AG04450 (cell line): ENCODE measurements at regions of chr3 and their contacts with region 1.

Region 1: GRCh38 chr3:187738331-187739093 is 6.8 kb downstream of the BCL6 start:
- DNase-seq: peak; percentile 80
- H3K4me3 ChIP-seq: peak overlapping the region; percentile 55
- H3K27ac ChIP-seq: peak overlapping the region; percentile 91
- H3K27me3 ChIP-seq: no peaks in the 10 kb centered on the region
- CTCF ChIP-seq: peak; percentile 85

Region 2: DNA sequence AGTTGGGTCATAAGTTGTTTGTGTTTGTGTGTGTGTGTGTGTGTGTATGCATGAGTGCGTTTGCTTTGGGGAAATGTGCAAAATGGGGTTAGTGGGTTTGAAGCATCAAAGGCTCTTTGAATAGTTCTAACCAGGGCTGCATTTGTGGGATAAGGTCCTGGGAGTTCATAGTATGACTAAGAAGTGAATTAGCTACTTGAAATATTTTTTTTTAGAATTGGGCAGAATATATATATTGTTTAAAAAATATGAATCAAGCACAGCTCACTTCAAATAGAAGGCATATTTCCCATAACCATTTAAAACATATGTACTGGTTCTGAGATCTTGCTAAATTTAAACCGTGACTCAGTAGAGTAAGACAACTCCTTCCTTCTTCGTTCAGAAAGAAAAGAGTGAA is 1956.8 kb before region 1 on chr3:
- CTCF ChIA-PET with region 1: no interaction called
- POLR2A ChIA-PET with region 1: no interaction called
- DNase-seq: peak; percentile 51
- H3K4me3 ChIP-seq: no peak overlapping the region
- H3K27ac ChIP-seq: no peak overlapping the region
- H3K27me3 ChIP-seq: no peaks in the 10 kb centered on the region
- CTCF ChIP-seq: no peak

Region 3: DNA sequence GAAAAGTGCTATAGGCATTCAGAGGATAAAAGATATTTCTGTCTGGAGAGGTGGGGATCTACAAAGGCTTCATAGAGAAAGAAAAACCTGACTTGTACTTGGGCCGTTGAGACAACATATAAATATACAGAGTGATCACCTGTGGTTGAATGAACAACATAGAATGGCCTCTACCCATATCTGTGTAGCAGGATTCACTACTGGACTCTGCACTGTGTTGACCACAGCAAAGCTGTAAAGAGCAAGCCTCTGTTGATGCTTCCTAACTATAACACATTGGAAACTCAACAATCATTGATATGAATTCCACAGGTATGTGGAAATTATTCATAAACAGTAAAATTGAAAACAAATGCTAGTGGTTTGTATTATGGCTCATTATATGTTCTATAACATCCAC is 396.3 kb after region 1 on chr3:
- CTCF ChIA-PET with region 1: interaction called, 12 read pairs
- POLR2A ChIA-PET with region 1: no interaction called
- DNase-seq: no peak
- H3K4me3 ChIP-seq: no peak overlapping the region
- H3K27ac ChIP-seq: no peak overlapping the region
- H3K27me3 ChIP-seq: no peaks in the 10 kb centered on the region
- CTCF ChIP-seq: no peak

Region 4: DNA sequence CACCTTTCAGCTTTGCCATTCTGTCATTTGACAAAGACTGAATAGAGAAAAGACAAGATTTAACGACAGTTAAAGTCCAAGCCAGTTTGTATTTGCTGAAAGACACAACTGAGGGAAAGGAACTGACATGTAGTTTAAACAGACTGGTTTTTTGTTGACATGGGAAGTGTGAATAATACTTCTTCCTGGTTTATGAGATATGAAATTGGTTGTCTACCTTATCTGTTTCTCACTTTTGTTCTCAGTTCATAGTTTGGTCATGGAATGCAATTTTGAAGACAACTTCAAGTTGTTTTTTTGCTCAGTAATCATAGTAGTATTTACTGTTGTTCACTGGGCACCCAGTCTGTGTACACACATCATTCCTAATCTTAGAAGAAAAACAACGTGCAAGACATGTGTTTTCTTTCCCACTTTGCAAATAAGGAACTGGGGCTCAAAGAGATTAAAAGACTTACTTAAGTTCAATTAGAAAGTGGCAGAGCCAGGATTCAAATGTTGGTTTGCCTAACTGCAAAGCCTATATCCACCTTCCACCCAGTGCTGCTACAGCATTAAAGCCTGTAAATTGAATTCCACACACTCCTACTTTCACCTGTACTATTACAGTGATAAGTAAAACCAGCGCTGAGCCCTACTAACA is 519.0 kb after region 1 on chr3:
- CTCF ChIA-PET with region 1: interaction called, 51 read pairs
- POLR2A ChIA-PET with region 1: no interaction called
- DNase-seq: no peak
- H3K4me3 ChIP-seq: no peak overlapping the region
- H3K27ac ChIP-seq: no peak overlapping the region
- H3K27me3 ChIP-seq: no peaks in the 10 kb centered on the region
- CTCF ChIP-seq: no peak

Region 5: GRCh38 chr3:188296761-188297612 is 558.5 kb after region 1 on chr3:
- CTCF ChIA-PET with region 1: interaction called, 11 read pairs
- POLR2A ChIA-PET with region 1: no interaction called
- DNase-seq: no peak
- H3K4me3 ChIP-seq: no peak overlapping the region
- H3K27ac ChIP-seq: peak overlapping the region; percentile 69
- H3K27me3 ChIP-seq: no peaks in the 10 kb centered on the region
- CTCF ChIP-seq: no peak

Region 6: GRCh38 chr3:188489639-188490405 is 751.3 kb after region 1 on chr3:
- CTCF ChIA-PET with region 1: interaction called, 16 read pairs
- POLR2A ChIA-PET with region 1: no interaction called
- DNase-seq: peak; percentile 41
- H3K4me3 ChIP-seq: no peak overlapping the region
- H3K27ac ChIP-seq: peak overlapping the region; percentile 12
- H3K27me3 ChIP-seq: no peaks in the 10 kb centered on the region
- CTCF ChIP-seq: no peak

Region 7: DNA sequence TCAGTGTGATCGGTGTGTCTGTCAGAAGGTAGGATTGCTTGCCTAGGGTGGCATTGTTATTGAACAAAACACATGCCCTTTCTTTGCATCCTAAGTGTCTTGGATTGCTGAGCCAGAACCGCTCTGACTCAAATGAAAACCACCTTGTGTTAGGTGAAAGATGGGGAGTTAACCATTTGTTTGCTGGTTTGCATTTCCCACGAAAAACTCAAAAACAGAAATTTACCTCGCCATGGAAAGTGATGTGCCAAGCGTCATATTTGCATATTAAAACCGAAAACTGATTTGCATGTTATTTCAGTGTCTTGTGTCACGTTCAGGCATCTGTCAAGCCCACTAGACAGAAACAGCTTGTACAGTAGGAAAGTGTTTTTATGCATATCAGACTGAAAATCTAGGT is 958.6 kb after region 1 on chr3:
- CTCF ChIA-PET with region 1: interaction called, 11 read pairs
- POLR2A ChIA-PET with region 1: no interaction called
- DNase-seq: no peak
- H3K4me3 ChIP-seq: no peak overlapping the region
- H3K27ac ChIP-seq: no peak overlapping the region
- H3K27me3 ChIP-seq: no peaks in the 10 kb centered on the region
- CTCF ChIP-seq: no peak

Region 8: GRCh38 chr3:189041482-189042090 is 1303.1 kb after region 1 on chr3:
- CTCF ChIA-PET with region 1: interaction called, 17 read pairs
- POLR2A ChIA-PET with region 1: no interaction called
- DNase-seq: no peak
- H3K4me3 ChIP-seq: no peak overlapping the region
- H3K27ac ChIP-seq: no peak overlapping the region
- H3K27me3 ChIP-seq: no peaks in the 10 kb centered on the region
- CTCF ChIP-seq: peak; percentile 52